ENCODE measurements at regions of chr6 and their contacts with region 1.

Region 1: GRCh38 chr6:91376686-91377085 is 789.8 kb upstream of the MAP3K7 start:
- DNase-seq: peak; percentile 19
- H3K4me3 ChIP-seq: no peak overlapping the region
- H3K27ac ChIP-seq: no peak overlapping the region
- H3K4me1 ChIP-seq: no peaks in the 10 kb centered on the region
- H3K27me3 ChIP-seq: no peaks in the 10 kb centered on the region
- CTCF ChIP-seq: no peak
- EP300 ChIP-seq: no peak
- POLR2A ChIP-seq: no peak

Region 2: DNA sequence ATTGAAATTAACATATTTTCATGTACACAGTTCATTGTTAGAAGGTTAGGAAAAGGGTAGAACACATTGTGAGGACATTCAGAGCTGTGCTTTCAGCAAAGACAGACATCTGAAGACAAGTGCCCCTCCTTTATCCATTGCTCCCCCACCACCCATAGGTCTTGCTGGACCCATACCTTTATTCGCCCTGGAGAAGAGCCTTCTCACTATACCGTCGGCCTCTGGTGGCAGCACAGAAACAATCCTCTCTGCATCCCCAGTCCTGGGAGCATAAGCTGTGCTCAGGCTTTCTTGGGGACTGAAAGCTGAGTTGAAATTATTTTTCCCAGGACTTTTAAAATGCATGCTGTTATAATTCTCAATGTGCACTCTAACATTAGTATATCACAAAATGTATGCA is 1670.3 kb after region 1 on chr6:
- in situ Hi-C with region 1: no loop called
- intact Hi-C with region 1: loop called (anchors 5 kb)
- DNase-seq: no peak
- H3K4me3 ChIP-seq: no peak overlapping the region
- H3K27ac ChIP-seq: no peak overlapping the region
- H3K4me1 ChIP-seq: no peaks in the 10 kb centered on the region
- H3K27me3 ChIP-seq: no peaks in the 10 kb centered on the region
- CTCF ChIP-seq: no peak
- EP300 ChIP-seq: no peak
- POLR2A ChIP-seq: no peak